ENCODE measurements at regions of chrX and their contacts with region 1.

Region 1: GRCh38 chrX:134990801-134991481 is at the start of gene SMIM10:
- DNase-seq: no peak
- H3K4me3 ChIP-seq: no peak within 1 kb of the TSS
- H3K27ac ChIP-seq: no peak within 1 kb of the TSS
- H3K4me1 ChIP-seq: no peaks in the 10 kb centered on the region
- H3K27me3 ChIP-seq: no peaks in the 10 kb centered on the region
- CTCF ChIP-seq: no peak
- total RNA-seq, gene SMIM10: not detected in 2 replicates

Region 2: DNA sequence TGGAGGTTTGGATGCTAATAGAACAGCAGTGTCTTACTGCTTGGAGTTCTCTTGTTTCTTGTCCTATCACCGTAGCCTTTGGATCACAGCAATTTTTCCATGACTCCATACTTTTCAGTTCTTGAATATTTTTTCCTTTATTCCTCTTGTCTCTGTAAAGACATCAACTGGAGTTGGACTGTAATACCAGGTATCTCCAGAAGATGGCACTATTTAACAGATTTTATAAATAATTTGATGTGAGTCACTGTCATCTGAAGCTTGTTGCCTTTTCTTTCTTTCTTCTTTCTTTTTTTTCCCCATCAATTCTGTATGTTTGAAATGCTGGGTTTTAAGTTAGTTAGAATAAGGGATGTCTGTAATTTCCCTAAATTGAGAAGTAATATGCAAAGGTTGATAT is 506.9 kb before region 1 on chrX:
- CTCF ChIA-PET with region 1: no interaction called
- POLR2A ChIA-PET with region 1: no interaction called
- intact Hi-C with region 1: loop called (anchors 10 kb)
- DNase-seq: peak; percentile 64
- H3K4me3 ChIP-seq: no peak overlapping the region
- H3K27ac ChIP-seq: no peak overlapping the region
- H3K4me1 ChIP-seq: no peaks in the 10 kb centered on the region
- H3K27me3 ChIP-seq: no peaks in the 10 kb centered on the region
- CTCF ChIP-seq: peak; percentile 67

Region 3: DNA sequence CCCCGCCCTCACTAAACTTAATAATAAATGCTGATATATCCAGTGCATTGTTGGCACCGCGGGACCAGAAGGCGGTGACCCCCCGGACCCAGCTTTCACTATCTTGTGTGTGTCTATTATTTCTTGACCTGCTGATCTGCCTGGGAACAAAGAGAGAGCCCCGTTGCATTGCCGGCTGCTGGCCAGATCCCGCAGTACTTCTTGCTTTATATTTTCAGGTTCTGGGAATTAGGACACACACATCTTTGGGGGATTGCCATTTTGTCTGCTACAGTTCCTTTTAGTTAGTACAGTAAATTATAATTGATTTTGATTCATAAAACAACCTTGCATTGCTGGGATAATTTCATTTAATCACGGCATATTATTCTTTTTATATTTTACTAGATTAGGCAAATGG is 33.6 kb after region 1 on chrX:
- CTCF ChIA-PET with region 1: no interaction called
- POLR2A ChIA-PET with region 1: no interaction called
- intact Hi-C with region 1: no loop called
- DNase-seq: no peak
- H3K4me3 ChIP-seq: no peak overlapping the region
- H3K27ac ChIP-seq: no peak overlapping the region
- H3K4me1 ChIP-seq: no peaks in the 10 kb centered on the region
- H3K27me3 ChIP-seq: no peaks in the 10 kb centered on the region
- CTCF ChIP-seq: no peak